Ovary (tissue), 10 donors: ENCODE measurements at regions of chr9 and their contacts with region 1.

Region 1: DNA sequence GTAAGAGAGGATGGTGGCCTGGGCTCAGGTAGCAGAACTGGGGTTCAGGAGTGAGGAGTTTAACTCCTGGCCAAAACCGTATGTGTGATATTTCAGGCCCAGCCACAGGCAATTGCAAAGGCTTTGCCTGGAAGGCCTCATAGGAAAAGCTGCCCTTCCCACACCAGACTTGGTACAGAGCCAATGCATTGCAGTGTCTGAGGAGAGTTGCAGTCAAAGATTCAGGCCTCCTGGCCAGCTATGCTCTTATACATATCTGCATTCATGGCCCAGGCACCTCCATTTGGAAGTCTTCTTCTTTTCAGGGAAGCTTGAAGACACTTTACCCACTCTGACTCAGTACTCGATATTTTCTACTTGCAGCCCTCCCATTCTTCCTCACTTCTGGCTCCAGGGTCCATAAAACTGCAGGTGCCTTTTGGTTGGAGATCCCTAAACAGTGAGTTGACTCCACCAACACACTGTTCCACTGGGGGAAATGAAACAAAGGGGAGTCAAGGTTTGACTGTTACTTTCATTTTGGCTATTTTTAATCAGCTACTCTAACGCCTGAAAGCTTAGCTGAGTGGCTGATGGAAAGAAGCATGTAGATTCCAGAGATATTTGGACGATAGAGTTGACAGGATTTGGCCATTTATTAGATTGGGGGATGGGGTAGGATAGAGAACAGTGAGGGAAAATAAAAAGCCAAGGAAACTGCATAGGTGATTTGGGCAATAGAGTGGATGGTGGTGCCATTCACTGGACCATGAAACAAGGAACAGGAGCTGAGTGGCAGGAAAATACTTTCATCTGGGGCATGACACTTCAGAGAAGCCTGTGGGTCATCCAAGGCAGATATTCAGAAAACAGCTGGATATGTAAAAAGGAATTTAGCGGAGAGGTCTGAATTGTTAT is 30.6 kb upstream of the IL33 start:
- DNase-seq: peak in 1 of 5 donors; percentile 40
- H3K4me3 ChIP-seq: no peak overlapping the region
- H3K27ac ChIP-seq: no peak overlapping the region
- H3K4me1 ChIP-seq: no peaks in the 10 kb centered on the region
- H3K27me3 ChIP-seq: no peaks in the 10 kb centered on the region
- CTCF ChIP-seq: no peak
- EP300 ChIP-seq: no peak
- POLR2A ChIP-seq: no peak

Region 2: GRCh38 chr9:6243746-6244145 is 58.7 kb after region 1 on chr9:
- intact Hi-C with region 1: loop called in 1 of 4 experiments (anchors 10 kb)
- DNase-seq: no peak
- H3K4me3 ChIP-seq: no peak overlapping the region
- H3K27ac ChIP-seq: no peak overlapping the region
- H3K4me1 ChIP-seq: no peaks in the 10 kb centered on the region
- H3K27me3 ChIP-seq: no peaks in the 10 kb centered on the region
- CTCF ChIP-seq: no peak
- EP300 ChIP-seq: no peak
- POLR2A ChIP-seq: no peak